Heart left ventricle (tissue), 16 donors: ENCODE measurements at regions of chr22 and their contacts with region 1.

Region 1: GRCh38 chr22:46528121-46528610 is 9.3 kb downstream of the CELSR1 start:
- DNase-seq: no peak
- ATAC-seq: no peak
- H3K4me3 ChIP-seq: no peak overlapping the region
- H3K27ac ChIP-seq: no peak overlapping the region
- H3K4me1 ChIP-seq: peaks cover 0 to 8% (median 0%) of the 10 kb centered on the region in 12 donors
- H3K27me3 ChIP-seq: peaks cover 0 to 12% (median 0%) of the 10 kb centered on the region in 9 donors
- CTCF ChIP-seq: no peak
- POLR2A ChIP-seq: no peak

Region 2: DNA sequence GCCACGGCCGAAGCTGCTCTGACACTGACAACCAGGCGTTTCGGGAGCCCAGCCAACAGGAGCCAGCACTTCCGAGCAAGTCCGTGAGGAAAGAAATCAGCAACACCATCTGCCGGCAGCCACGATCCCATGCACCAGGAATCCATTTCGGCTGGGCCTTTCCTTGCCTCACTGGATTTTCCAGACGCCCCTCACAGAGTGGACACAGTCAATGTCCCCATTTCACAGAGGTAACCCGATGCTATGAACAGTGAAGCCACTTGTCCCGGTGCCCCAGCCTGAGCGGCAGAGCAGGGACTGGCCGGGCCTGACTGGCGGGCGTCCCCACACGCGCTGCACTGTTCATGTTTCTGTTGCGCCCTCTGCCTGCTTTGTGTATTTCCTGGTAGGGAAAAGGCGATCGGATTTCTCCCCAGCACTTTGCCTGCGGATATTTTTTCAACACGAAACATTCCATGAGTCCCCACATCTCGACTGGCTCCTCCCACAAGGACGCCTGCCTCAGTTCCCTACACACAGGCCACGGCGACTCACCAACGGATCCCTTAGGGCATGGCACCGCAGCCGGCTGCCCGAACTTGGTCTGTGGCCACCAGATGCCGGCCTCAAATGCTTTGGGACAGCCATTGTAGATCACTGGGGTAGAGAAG is 137.4 kb before region 1 on chr22:
- intact Hi-C with region 1: loop called in 1 of 10 experiments (anchors 10 kb)
- DNase-seq: peak; percentile 63 to 78 (median 76)
- ATAC-seq: peak; percentile 24 to 82 (median 69)
- H3K4me3 ChIP-seq: peak overlapping the region in 3 of 12 donors; percentile 9 to 42 (median 41)
- H3K27ac ChIP-seq: peak overlapping the region in 3 of 12 donors; percentile 20 to 49 (median 32)
- H3K4me1 ChIP-seq: peaks cover 0 to 8% (median 1%) of the 10 kb centered on the region in 12 donors
- H3K27me3 ChIP-seq: no peaks in the 10 kb centered on the region
- CTCF ChIP-seq: peak in 10 of 12 donors; percentile 9 to 67 (median 34)
- POLR2A ChIP-seq: no peak

Region 3: DNA sequence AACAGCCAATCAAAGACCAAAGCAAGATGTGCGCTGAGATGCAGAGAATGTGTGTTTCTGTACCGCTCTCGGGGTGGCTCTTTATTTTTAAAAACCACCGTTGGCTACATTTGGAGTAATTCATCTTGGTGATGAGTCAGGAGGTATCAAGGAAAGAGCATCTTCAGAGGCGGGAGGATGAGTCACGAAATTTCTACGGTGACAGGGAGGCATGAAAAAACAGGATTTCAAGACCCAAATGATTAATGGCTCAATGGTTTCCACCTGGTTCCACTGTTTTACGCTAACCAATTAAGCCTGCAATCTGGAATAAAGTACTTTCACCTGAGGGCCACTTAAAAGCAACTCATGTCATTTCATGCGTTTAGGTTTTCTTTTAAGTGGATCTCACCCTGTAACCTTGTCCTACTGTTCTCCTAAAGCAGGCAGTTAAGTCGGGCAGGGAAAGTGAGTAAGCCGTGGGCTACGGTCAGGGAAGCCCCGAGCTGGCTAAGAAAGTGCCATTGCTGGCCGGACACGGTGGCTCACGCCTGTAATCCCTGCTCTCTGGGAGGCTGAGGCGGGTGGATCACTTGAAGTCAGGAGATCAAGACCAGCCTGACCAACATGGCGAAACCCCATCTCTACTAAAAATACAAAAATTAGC is 65.3 kb before region 1 on chr22:
- intact Hi-C with region 1: loop called in 1 of 10 experiments (anchors 10 kb)
- DNase-seq: peak in 1 of 5 donors; percentile 19
- ATAC-seq: no peak
- H3K4me3 ChIP-seq: no peak overlapping the region
- H3K27ac ChIP-seq: no peak overlapping the region
- H3K4me1 ChIP-seq: peaks cover 0 to 10% (median 0%) of the 10 kb centered on the region in 12 donors
- H3K27me3 ChIP-seq: no peaks in the 10 kb centered on the region
- CTCF ChIP-seq: no peak
- POLR2A ChIP-seq: no peak

Region 4: DNA sequence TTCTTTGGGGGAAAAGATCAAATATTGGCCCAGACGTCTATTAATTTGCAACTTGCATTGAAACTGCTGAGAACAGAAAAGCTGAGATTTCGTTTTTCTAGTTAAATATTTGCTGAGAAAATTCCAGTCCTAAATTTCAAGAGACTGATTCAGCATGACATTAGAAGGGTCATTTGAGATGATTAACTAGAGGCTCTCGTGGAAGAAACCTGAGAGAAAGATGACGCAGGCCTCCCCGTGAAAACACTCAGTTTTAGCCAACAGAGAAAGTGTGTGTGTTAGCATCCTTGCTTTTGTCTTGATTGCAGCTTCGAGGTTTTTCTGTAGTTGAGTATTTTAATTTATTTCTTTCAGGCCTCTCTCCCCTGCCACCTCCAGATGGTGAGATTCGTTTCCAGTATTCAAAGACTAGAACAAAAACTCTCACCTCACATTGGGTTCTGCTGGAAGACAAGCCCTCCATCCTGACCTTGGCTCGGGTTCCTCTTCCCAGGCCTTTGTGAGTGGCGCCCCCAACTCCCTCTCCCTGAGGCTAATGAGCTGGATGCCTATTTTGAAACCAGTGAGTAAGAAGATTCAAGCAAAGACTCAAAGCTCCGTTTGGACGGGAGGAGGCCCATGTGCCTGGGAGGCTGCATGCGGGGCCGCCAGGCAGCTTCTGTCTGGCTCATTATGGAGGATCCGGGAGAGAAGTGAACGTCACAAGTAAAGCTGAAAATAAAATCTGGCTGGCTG is 43.1 kb before region 1 on chr22:
- intact Hi-C with region 1: no loop called
- DNase-seq: no peak
- ATAC-seq: peak in 1 of 4 donors; percentile 28
- H3K4me3 ChIP-seq: no peak overlapping the region
- H3K27ac ChIP-seq: no peak overlapping the region
- H3K4me1 ChIP-seq: peaks cover 0 to 14% (median 0%) of the 10 kb centered on the region in 12 donors
- H3K27me3 ChIP-seq: no peaks in the 10 kb centered on the region
- CTCF ChIP-seq: no peak
- POLR2A ChIP-seq: no peak

Region 5: DNA sequence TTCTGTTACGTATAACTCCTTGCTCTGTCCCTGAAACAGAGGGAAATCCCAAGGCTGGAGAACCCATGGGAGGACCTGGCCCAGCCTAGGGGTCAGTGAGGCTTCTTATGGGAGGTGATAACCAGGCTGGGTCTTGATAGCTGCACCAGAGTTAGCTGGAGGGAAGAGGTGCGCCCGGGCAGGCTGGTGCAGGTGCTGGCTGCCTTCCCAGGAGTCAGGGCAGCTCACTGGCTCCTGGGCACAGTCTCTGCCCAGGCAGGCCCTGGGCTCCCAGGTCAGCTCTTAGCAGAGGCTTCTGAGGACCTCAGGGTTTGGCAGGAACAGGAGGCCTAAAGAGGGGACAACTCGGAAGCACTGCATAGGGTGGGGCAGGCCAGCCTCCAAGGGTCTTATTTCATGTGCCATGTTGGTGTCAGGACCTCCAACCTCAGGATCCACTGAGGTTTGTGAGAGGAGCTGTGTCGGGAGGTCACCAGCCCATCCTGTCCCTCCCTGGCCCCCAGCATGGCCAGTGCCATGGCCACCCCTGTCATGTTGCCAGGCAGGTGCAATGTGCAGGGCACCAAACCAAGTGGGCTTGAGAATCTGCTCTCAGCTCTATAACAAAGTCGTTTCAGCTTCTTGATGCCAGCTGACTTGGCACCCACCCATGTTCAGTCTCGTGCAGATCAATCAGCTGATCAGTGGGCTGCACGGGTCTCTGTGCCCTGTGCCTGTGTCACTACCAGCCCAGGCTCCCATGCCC is 29.7 kb after region 1 on chr22:
- intact Hi-C with region 1: no loop called
- DNase-seq: peak in 4 of 5 donors; percentile 26 to 73 (median 54)
- ATAC-seq: peak; percentile 64 to 85 (median 79)
- H3K4me3 ChIP-seq: no peak overlapping the region
- H3K27ac ChIP-seq: peak overlapping the region in 9 of 12 donors; percentile 12 to 71 (median 51)
- H3K4me1 ChIP-seq: peaks cover 0 to 20% (median 4%) of the 10 kb centered on the region in 12 donors
- H3K27me3 ChIP-seq: no peaks in the 10 kb centered on the region
- CTCF ChIP-seq: no peak
- POLR2A ChIP-seq: no peak

Region 6: DNA sequence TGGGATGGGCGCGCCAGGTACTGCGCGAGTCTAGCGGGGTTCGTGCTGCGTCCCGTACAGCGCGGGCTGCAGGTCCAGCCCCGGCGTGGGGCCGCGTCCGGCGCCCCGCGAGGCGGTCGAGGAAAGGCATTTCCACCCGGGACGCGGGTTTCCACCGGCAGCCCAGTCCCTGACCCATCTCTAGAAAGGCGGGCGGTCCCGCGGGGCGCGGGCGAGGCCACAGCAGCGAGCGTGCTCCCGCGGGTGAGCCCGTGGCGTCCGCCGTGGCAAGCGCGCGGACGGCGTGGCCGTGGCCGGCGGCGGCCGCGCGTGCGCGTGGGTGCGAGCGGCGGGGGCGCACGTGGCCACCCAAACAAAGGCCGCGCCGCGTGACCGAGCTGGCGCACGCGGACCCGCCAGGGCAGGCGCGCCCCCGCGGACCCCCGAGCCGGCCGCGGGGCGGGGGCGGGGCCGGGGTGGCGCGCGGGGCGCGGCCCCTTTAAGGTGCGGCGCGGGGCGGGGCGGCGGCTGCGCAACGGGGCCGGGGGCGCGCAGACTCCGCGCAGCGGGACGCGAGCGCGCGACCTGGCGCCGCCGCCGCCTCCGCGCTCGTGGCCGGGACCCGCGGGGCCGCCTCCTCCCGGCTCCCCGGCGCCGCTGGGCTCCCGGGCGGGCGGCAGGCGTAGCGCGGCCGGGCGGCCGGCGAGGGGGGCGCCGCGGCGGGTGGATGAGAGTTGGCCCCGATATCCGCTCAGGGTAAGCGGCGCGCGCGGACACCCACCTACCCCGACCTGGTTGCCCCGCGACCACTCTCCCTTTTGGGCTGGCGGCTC is 48.6 kb after region 1 on chr22:
- intact Hi-C with region 1: no loop called
- DNase-seq: peak; percentile 50 to 83 (median 75)
- ATAC-seq: peak in 2 of 4 donors; percentile 21 to 23
- H3K4me3 ChIP-seq: peak overlapping the region; percentile 64 to 89 (median 80)
- H3K27ac ChIP-seq: peak overlapping the region; percentile 69 to 96 (median 87)
- H3K4me1 ChIP-seq: peaks cover 24 to 79% (median 63%) of the 10 kb centered on the region in 12 donors
- H3K27me3 ChIP-seq: no peaks in the 10 kb centered on the region
- CTCF ChIP-seq: no peak
- POLR2A ChIP-seq: no peak

Region 7: DNA sequence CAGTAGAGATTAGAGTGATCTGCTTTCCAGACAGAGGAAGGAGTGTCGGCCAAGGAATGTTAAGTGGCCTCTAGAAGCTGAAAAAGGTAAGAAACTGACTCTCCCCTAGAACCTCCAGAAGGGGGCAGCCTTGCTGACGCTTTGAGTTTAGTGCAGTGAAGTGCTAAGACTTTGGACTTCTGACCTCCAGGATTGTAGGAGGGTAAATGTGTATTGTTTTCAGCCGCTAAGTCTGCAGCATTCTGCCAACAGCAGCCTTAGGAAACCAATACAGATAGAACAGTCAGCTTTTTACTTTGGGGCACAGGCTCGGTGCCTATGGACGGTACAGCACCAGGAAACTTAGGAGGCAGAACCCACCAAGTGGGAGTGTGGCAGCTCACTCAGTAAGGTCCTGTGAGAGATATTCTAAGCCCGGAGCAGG is 230.7 kb after region 1 on chr22:
- intact Hi-C with region 1: no loop called
- DNase-seq: peak in 3 of 5 donors; percentile 54 to 63 (median 60)
- ATAC-seq: peak in 1 of 4 donors; percentile 2
- H3K4me3 ChIP-seq: no peak overlapping the region
- H3K27ac ChIP-seq: peak overlapping the region in 10 of 12 donors; percentile 4 to 73 (median 39)
- H3K4me1 ChIP-seq: peaks cover 4 to 49% (median 39%) of the 10 kb centered on the region in 12 donors
- H3K27me3 ChIP-seq: no peaks in the 10 kb centered on the region
- CTCF ChIP-seq: peak; percentile 57 to 81 (median 72)
- POLR2A ChIP-seq: no peak